ENCODE measurements at regions of chr5 and their contacts with region 1.

Region 1: GRCh38 chr5:151252762-151253604 is at the start of gene GM2A:
- DNase-seq: peak; percentile 99
- H3K4me3 Mint-ChIP-seq: peak within 1 kb of the TSS; percentile 85
- H3K27ac Mint-ChIP-seq: peak within 1 kb of the TSS; percentile 84
- H3K4me1 Mint-ChIP-seq: peaks cover 45% of the 10 kb centered on the region
- H3K27me3 Mint-ChIP-seq: no peaks in the 10 kb centered on the region
- total RNA-seq, gene GM2A: 20.4 and 20.9 TPM in 2 replicates

Region 2: GRCh38 chr5:150758531-150759333 is 494.3 kb before region 1 on chr5 and contains the start of gene DCTN4:
- intact Hi-C with region 1: loop called (anchors 1 kb)
- DNase-seq: peak; percentile 90
- H3K4me3 Mint-ChIP-seq: no peak within 1 kb of the TSS
- H3K27ac Mint-ChIP-seq: no peak within 1 kb of the TSS
- H3K4me1 Mint-ChIP-seq: peaks cover 36% of the 10 kb centered on the region
- H3K27me3 Mint-ChIP-seq: no peaks in the 10 kb centered on the region
- total RNA-seq, gene DCTN4: 40.9 and 44.7 TPM in 2 replicates

Region 3: DNA sequence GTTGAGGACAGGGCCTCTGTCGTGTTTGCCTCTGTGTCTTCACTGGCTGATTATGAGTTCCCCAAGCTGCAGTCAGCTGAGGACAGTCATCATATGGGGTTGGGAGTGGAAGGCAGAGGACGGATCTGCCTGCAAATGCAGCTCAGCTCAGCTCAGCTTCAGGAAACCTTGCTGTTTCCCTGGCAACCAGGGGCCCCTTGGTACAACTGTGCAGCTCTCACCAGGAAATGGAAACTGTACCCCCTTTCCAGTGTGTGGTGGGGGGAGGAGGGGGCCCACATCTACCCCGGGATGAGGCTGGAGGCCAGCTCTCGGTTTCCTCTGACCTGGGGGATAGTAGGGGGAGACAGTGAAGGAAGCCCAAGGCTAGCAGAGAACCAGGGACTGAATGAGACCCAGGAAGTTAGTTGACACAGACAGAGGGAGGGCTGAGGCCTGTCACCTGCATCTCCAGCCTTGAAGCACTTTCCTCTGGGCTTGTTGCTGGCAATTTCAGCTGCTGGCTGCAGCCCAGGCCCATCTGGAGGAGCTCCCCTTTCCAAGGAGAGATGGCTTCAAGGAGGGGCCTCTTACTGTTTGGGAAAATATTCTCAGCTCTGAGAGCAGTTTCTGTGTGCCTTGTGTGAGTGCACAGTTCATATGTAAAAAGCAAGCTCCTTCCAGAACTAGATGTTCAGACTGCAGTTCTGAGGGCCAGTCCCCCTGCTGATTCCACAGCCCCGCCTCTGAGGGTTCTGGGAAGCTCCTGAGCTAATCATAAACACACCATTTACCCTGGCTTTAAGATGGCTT is 102.3 kb before region 1 on chr5:
- intact Hi-C with region 1: loop called (anchors 1 kb)
- DNase-seq: peak; percentile 69
- H3K4me3 Mint-ChIP-seq: peak overlapping the region; percentile 59
- H3K27ac Mint-ChIP-seq: peak overlapping the region; percentile 86
- H3K4me1 Mint-ChIP-seq: peaks cover 78% of the 10 kb centered on the region
- H3K27me3 Mint-ChIP-seq: no peaks in the 10 kb centered on the region

Region 4: DNA sequence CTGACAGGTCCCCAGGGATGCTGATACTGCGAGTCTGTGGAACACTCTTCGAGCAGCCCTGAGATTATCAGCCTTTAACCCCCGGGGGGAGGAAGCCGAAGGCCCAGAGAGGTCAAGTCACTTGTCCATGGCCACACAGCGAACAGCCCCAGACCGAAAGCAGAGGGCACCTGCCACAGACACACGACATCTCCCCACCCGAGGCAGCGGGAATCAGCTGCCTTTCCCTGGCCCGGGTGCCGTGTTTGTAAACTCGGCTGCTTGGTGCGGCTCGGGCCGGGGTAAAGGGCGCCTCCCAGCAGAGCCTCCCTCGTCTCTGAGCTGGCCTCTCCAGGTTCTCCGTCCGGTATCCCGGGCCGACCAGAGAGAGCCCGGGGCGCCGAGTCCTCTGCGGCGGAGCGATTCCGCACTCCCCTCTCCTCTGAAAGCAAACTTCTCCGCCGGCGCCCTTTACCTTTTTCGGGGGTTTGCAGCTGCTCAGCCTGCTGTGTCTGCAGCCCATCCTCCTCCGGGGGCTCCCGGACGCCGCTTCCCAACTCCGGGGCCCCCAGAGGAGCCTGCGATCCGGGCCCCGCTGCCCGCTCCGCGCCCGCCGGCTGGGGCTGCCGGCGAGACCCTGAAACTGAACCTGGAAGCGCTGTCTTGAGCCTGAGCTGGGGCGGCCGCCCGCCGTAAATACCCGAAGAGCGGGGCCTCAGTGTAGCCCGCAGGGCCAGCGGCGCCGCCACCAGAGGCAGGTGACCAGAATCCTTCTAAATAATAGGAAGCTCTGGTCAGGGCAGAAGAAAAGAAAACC is 29.3 kb before region 1 on chr5 and contains the start of gene CCDC69:
- intact Hi-C with region 1: loop called (anchors 1 kb)
- DNase-seq: peak; percentile 51
- H3K4me3 Mint-ChIP-seq: peak within 1 kb of the TSS; percentile 81
- H3K27ac Mint-ChIP-seq: peak within 1 kb of the TSS; percentile 79
- H3K4me1 Mint-ChIP-seq: peaks cover 53% of the 10 kb centered on the region
- H3K27me3 Mint-ChIP-seq: no peaks in the 10 kb centered on the region
- total RNA-seq, gene CCDC69: 29.8 and 31.4 TPM in 2 replicates

Region 5: DNA sequence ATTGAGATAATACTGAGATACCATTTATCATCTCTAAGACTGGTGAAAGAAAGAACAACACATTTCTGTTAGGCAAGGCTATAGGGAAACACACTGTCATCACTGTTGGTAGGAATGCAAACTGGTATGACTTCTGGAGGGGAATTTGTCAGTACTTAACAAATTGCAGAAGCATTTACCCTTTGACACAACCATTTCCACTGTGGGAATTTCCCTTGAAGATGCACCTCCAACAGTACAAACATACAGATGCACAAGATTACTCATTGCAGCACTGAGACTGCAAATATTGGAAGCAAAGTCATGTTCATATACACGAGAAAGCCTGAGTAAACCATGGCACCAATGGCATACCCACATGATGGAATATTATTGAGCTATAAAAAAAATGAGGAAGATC is 17.6 kb after region 1 on chr5:
- intact Hi-C with region 1: loop called (anchors 2 kb)
- DNase-seq: no peak
- H3K4me3 Mint-ChIP-seq: no peak overlapping the region
- H3K27ac Mint-ChIP-seq: no peak overlapping the region
- H3K4me1 Mint-ChIP-seq: no peaks in the 10 kb centered on the region
- H3K27me3 Mint-ChIP-seq: no peaks in the 10 kb centered on the region